ENCODE measurements at regions of chr7 and their contacts with region 1.

Region 1: GRCh38 chr7:31633894-31634494 is 53.0 kb upstream of the PPP1R17 start:
- DNase-seq: peak; percentile 64
- H3K27ac ChIP-seq: no peak overlapping the region
- CTCF ChIP-seq: peak; percentile 69

Region 2: GRCh38 chr7:31373337-31374289 is 260.4 kb before region 1 on chr7:
- CTCF ChIA-PET with region 1: interaction called, 11 read pairs
- POLR2A ChIA-PET with region 1: no interaction called
- DNase-seq: peak; percentile 61
- H3K27ac ChIP-seq: no peak overlapping the region
- CTCF ChIP-seq: peak; percentile 52

Region 3: GRCh38 chr7:31443457-31443856 is 190.5 kb before region 1 on chr7:
- CTCF ChIA-PET with region 1: interaction called, 14 read pairs
- POLR2A ChIA-PET with region 1: no interaction called
- DNase-seq: peak; percentile 55
- H3K27ac ChIP-seq: no peak overlapping the region
- CTCF ChIP-seq: peak; percentile 80

Measured in RWPE1 (cell line).